Activated CD4-positive, alpha-beta memory T cell treated with anti-CD3 and anti-CD28 coated beads, Interleukin-2, amount 10 ng/mL, durations not matched to agents 7 days and 5 days (primary cell): ENCODE measurements at regions of chr2 and their contacts with region 1.

Region 1: GRCh38 chr2:38685116-38685735 is 19.3 kb downstream of the GALM start:
- DNase-seq: no peak
- H3K4me3 Mint-ChIP-seq: no peak overlapping the region
- H3K27ac Mint-ChIP-seq: peak overlapping the region; percentile 12
- H3K4me1 Mint-ChIP-seq: peaks cover 76% of the 10 kb centered on the region
- H3K27me3 Mint-ChIP-seq: no peaks in the 10 kb centered on the region

Region 2: DNA sequence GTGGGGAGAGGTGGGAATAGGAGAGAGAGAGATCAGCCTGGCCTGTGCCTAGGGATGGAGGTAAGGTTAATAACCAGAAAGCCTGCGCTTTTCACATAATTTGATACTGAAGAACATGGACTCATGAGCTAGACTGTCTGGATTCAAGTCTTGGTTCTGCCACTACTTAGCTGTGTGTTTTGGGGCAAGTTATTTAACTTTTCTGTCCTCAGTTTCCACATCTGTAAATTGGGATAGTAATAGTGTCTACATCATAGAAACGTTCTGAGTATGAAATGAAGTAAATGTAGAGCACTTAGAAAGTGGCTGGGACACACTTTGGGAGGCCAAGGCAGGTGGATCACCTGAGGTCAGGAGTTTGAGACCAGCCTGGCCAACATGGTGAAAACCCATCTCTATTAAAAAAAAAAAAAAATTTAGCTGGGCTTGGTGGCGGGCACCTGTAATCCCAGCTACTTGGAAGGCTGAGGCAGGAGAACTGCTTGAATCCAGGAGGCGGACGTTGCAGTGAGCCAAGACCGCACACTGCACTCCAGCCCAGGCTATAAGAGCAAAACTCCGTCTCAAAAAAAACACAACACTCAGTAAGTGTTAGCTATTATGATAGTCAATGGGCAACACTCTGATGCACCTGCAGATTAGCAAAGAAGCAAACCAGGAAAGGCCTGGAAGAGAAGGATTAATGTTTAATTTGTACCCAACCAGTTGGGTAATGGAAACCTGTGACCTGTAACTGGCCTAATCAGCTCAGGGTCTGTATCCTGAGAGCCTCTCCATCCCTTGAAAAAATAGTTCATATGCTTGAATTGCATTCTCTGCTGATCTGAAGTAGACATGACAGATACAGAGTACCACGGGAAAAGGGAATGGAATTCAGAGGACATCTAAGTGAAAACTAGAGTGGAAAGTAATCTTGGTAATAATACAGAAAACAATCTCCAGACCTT is 12.5 kb before region 1 on chr2:
- CTCF ChIA-PET with region 1: interaction called, 27 read pairs
- POLR2A ChIA-PET with region 1: interaction called, 92 read pairs
- DNase-seq: no peak
- H3K4me3 Mint-ChIP-seq: no peak overlapping the region
- H3K27ac Mint-ChIP-seq: peak overlapping the region; percentile 9
- H3K4me1 Mint-ChIP-seq: peaks cover 79% of the 10 kb centered on the region
- H3K27me3 Mint-ChIP-seq: no peaks in the 10 kb centered on the region

Region 3: DNA sequence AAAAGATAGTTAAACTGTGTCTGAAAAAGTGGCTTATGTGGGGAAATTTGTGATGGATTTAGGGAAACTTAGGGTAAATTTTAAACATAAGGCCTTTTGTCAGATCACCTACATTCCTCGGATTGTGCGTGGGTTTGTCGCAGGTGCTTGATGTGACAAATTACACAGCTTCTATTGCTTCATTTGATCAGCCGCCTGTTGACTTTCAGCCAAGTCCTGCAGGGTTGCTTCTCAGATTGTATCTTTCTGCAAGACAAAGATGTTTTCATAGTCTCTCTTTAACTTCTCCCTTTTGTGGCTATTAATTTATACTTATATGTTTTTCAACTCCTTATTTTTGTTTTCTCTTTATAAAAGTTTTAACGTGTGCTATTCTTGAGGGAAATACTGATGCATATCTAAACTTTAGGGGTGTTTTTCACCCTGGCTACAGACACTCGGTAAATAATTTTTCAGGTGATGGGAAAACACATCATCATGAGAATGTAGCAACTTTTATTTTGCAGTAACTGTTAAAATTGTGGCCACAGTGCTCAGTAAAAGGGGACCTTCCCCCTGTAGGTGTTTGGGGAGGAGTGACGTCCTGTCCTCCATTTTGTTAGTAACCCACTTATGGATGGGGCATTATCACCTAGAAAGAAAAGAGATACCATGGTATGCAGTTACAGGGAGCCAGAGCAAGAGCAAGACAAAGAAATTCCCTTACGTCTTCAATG is 12.1 kb after region 1 on chr2:
- CTCF ChIA-PET with region 1: interaction called, 23 read pairs
- POLR2A ChIA-PET with region 1: interaction called, 28 read pairs
- DNase-seq: peak; percentile 33
- H3K4me3 Mint-ChIP-seq: peak overlapping the region; percentile 12
- H3K27ac Mint-ChIP-seq: peak overlapping the region; percentile 90
- H3K4me1 Mint-ChIP-seq: peaks cover 87% of the 10 kb centered on the region
- H3K27me3 Mint-ChIP-seq: no peaks in the 10 kb centered on the region

Region 4: DNA sequence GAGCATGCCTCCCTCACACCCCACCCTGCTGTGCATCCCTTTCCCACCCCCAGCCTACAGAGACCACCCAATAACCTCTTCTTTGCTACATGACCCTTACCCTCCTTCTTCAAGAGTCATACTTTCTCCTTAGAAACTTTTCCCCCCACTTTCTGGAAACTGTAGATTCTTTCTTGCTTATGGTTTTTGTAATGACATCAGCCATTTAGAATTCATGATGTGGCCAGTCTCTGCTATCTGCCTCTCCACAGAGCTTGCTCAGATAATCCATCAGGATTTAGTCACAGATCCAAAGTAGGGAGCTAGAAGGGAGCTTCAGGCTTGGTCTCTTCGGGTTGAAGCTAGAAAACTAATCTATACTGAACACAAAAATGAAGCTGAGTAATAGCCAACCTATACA is 17.2 kb after region 1 on chr2:
- CTCF ChIA-PET with region 1: interaction called, 23 read pairs
- POLR2A ChIA-PET with region 1: interaction called, 25 read pairs
- DNase-seq: no peak
- H3K4me3 Mint-ChIP-seq: peak overlapping the region; percentile 6
- H3K27ac Mint-ChIP-seq: peak overlapping the region; percentile 52
- H3K4me1 Mint-ChIP-seq: peaks cover 69% of the 10 kb centered on the region
- H3K27me3 Mint-ChIP-seq: no peaks in the 10 kb centered on the region

Region 5: GRCh38 chr2:38720613-38721241 is 35.5 kb after region 1 on chr2:
- CTCF ChIA-PET with region 1: interaction called, 9 read pairs
- POLR2A ChIA-PET with region 1: interaction called, 11 read pairs
- DNase-seq: no peak
- H3K4me3 Mint-ChIP-seq: no peak overlapping the region
- H3K27ac Mint-ChIP-seq: peak overlapping the region; percentile 70
- H3K4me1 Mint-ChIP-seq: peaks cover 65% of the 10 kb centered on the region
- H3K27me3 Mint-ChIP-seq: no peaks in the 10 kb centered on the region